ENCODE measurements at regions of chr10 and their contacts with region 1.

Region 1: GRCh38 chr10:13371897-13372470 is 23.9 kb upstream of the SEPHS1 start:
- DNase-seq: no peak
- ATAC-seq: peak; percentile 85

Region 2: GRCh38 chr10:13219685-13220670 is 152.0 kb before region 1 on chr10:
- intact Hi-C with region 1: no loop called
- DNase-seq: no peak
- ATAC-seq: no peak

Region 3: DNA sequence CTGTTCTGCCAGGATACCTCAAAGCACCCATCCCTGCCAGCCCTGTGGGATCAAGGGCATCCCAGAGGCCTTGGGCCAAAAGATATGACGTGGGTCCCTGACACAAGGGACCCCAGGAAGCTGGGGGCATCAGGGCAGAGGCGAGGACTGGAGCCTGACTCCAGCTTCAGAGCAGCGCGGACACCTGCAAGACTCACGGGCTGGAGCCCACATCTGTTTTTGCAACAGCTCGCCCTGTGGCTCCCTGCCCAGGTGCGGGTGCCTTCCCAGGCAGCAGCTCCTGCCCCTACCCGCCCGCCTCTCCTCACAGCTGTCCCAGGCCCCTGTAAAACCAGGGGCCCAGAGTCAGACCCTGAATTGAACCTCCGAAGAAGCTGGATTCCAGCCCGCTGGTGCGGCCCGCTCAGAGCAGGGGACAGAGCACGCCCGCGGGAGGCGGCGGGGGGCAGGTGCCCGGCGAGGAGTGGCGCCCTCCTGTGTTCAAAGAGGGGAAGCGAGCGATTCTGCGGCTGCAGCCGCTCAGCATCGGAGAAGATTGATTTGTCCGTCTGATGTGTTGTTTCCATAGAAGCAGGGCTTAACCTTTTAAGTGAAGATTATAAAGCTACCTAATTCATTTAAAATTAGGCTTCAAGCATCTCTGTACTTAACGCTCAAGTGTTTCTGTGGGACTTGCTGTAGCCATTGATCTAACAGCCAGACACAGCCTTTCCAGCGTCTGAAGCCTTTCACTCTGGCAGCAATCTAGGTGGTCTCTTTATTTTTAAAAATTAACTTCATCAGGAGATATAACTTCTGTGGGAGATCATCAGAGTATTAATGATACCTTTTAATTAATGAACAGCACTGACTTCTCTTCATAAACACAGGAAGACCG is 68.4 kb after region 1 on chr10:
- intact Hi-C with region 1: loop called (anchors 2 kb)
- DNase-seq: no peak
- ATAC-seq: peak; percentile 76

Region 4: GRCh38 chr10:13536674-13537366 is 164.8 kb after region 1 on chr10:
- intact Hi-C with region 1: loop called (anchors 2 kb)
- DNase-seq: no peak
- ATAC-seq: peak; percentile 72

Region 5: DNA sequence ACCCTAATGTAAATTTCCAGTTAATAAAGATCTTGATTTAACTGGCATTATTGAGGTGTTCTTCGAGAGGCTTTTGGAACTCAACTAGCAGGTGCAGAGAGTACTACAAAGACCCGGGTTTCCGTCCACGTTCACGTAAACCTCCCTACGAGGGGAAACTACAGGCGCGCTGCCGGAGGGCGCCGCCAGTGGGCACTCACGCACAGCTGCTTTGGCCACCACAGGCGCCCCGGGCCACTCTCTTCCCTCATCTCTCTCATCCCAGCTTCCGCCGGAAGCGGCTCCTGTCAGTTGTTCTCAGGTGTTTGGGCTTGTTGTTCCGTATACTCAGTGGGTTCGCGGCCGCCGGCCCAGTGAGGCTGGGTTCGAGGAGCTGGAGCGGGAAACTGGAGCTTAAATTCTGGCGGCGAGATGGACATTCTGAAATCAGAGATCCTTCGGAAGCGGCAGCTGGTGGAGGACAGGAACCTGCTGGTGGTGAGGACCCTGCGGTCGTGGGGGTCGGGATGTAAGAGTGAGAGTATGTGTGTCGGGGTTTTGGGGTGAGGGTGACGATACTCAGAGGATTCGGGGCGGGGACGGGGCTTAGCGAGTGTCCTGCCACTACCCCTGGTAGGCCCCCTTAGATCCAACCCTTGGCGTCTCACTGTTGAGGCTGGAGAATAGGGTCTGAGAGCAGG is 214.8 kb after region 1 on chr10 and contains the start of gene PRPF18:
- intact Hi-C with region 1: loop called (anchors 5 kb)
- DNase-seq: peak; percentile 97
- ATAC-seq: peak; percentile 100
- total RNA-seq, gene PRPF18: 13.9 TPM

Measured in Right ventricle myocardium inferior (tissue), 1 donor.